Breast epithelium (tissue), 4 donors: ENCODE measurements at regions of chr2 and their contacts with region 1.

Region 1: DNA sequence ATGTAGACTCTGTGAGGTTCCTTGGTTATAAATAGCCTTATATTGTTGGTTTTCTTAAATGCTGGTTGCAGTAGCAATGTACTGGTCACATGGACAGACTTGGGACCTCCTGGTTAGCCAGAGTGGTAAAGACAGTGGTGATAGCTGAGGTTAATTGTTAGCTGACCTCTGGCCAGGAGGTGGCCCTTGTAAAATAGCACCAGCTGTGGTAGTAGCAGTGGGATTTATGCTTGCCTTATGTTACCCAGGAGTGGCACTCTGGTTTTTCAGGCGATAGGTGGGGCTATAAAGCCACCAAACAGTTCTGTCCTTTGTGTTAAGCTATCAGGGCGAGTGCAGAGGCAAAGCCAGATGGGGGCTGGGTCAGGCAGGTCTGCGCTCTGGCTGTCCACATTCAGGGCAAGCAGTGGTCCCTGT is 94.8 kb upstream of the SRD5A2 start:
- DNase-seq: no peak
- H3K4me3 ChIP-seq: no peak overlapping the region
- H3K27ac ChIP-seq: no peak overlapping the region
- H3K4me1 ChIP-seq: no peaks in the 10 kb centered on the region
- H3K27me3 ChIP-seq: no peaks in the 10 kb centered on the region
- CTCF ChIP-seq: no peak
- POLR2A ChIP-seq: no peak

Region 2: DNA sequence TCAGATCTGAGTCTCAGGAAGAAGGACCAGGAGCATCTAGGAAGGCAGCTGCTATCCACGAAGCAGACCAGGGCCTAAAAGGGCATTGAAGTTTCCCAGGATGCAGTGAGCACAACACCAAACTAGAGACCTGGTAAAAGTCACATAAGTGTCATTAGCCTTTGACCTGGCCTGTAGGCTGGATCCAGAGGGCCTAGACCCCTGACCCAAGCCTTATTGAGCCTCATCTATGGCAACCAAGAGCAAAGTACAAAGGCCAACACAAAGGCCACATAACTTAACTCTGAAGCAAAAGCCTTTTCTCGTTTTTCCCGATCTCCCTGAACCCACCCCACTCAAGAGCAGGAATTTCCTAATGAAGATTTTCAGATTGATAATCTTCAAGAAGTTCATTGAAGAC is 32.5 kb after region 1 on chr2:
- intact Hi-C with region 1: loop called (anchors 2 kb)
- DNase-seq: no peak
- H3K4me3 ChIP-seq: no peak overlapping the region
- H3K27ac ChIP-seq: no peak overlapping the region
- H3K4me1 ChIP-seq: no peaks in the 10 kb centered on the region
- H3K27me3 ChIP-seq: no peaks in the 10 kb centered on the region
- CTCF ChIP-seq: no peak
- POLR2A ChIP-seq: no peak